AG04449 (cell line): ENCODE measurements at regions of chr2 and their contacts with region 1.

Region 1: GRCh38 chr2:102753563-102754159 is 8.2 kb upstream of the TMEM182 start:
- DNase-seq: peak; percentile 10
- H3K4me3 ChIP-seq: no peak overlapping the region
- CTCF ChIP-seq: peak; percentile 58

Region 2: GRCh38 chr2:101580528-101580927 is 1173.1 kb before region 1 on chr2:
- CTCF ChIA-PET with region 1: no interaction called
- POLR2A ChIA-PET with region 1: no interaction called
- DNase-seq: no peak
- H3K4me3 ChIP-seq: no peak overlapping the region
- CTCF ChIP-seq: no peak

Region 3: GRCh38 chr2:102736410-102737409 is 17.0 kb before region 1 on chr2:
- CTCF ChIA-PET with region 1: interaction called, 48 read pairs
- POLR2A ChIA-PET with region 1: no interaction called
- DNase-seq: no peak
- H3K4me3 ChIP-seq: peak overlapping the region; percentile 86
- CTCF ChIP-seq: no peak

Region 4: DNA sequence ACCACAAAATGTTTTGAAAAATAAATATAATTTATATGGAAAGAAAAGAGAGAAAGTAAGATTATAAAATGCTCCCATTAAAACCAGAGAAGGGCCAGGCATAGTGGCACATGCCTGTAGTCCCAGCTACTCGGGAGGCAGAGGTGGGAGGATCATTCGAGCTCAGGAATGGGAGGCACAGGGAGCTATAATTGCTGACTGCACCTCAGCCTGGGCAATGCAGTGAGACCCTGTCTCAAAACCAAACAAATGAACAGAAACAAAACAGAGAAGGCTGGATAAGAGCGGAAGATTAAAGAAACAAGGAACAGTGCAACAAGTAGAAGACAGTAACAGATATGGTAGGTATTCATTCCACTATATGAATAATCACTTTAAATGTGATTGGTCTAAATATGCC is 10.4 kb before region 1 on chr2:
- CTCF ChIA-PET with region 1: interaction called, 48 read pairs
- POLR2A ChIA-PET with region 1: no interaction called
- DNase-seq: no peak
- H3K4me3 ChIP-seq: no peak overlapping the region
- CTCF ChIP-seq: no peak

Region 5: DNA sequence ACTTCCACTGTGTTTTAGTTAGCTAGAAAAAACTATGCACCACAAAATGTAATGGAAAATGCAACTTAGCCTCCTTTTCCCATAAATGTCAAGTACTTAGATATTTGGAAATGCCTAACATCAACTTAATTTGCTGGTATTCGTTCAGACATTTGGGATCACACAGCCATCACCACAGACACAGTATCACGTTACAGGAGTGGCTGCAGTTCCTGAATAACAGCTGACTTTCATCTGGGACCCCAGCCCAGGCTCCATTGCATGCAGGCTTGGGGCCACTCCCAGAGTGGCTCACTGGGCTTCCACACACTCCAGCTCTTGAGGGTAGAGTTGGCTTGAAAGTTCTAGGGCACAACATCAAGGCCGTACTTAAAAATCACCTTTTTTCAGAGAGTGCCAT is 17.5 kb after region 1 on chr2:
- CTCF ChIA-PET with region 1: interaction called, 87 read pairs
- POLR2A ChIA-PET with region 1: no interaction called
- DNase-seq: no peak
- H3K4me3 ChIP-seq: no peak overlapping the region
- CTCF ChIP-seq: no peak

Region 6: GRCh38 chr2:102806250-102806837 is 52.7 kb after region 1 on chr2:
- CTCF ChIA-PET with region 1: interaction called, 125 read pairs
- POLR2A ChIA-PET with region 1: no interaction called
- DNase-seq: peak; percentile 12
- H3K4me3 ChIP-seq: no peak overlapping the region
- CTCF ChIP-seq: peak; percentile 88

Region 7: GRCh38 chr2:102880731-102881130 is 127.1 kb after region 1 on chr2:
- CTCF ChIA-PET with region 1: no interaction called
- POLR2A ChIA-PET with region 1: no interaction called
- DNase-seq: no peak
- H3K4me3 ChIP-seq: no peak overlapping the region
- CTCF ChIP-seq: no peak